ENCODE measurements at regions of chr17 and their contacts with region 1.

Region 1: DNA sequence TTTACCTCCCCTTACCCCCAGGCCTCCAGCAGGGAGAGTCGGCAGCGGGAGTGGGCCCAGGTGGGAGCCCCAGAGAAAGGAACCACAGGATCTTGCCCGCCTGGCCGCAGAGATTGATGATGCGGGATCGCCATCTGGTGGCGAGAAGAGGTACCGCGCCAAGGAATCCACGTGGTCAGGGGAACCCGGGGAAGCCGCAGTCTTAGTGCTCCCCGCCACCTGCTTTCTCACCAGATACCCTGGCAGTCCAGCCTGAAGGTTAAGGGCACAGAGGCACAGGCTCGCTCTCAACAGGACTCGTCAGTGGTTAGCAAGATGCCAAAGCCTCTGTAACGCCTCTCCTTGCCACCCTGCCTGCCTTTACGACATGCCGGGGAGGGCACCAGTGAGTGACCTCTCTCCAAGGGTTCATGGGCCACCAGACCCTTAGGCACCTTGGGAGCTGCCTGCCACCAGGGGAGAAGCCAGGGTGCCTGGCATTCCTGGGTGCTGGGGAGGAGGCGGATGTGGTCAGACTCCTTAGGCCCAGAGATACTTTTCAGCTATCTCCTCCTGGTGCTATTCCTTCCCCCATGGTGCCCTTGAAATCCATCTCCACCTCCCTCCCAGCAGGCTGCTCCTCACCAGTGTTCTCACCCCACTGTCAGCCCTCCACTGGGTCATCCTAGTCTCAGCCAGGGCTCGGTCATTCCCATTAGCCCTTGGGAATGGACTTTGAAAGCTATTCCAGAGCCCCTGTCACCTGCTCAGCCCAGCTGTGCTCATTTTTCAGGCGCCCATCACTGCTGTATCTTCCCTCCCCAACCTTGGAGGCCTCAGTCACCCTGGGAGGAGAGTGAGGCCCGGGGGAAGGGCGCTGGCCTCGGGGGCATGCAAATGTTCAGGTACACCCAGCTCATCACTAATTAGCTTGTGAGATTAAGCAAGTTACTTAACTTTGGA is 5.5 kb upstream of the RHBDF2 start:
- DNase-seq: no peak
- ATAC-seq: peak; percentile 90
- H3K4me3 ChIP-seq: peak overlapping the region in 1 of 2 experiments; percentile 33; a peak in 2 of 4 replicates
- H3K27ac ChIP-seq: no peak overlapping the region; the same call in 1 of the 2 replicates
- H3K4me1 ChIP-seq: peaks cover 7% of the 10 kb centered on the region
- H3K27me3 ChIP-seq: no peaks in the 10 kb centered on the region
- CTCF ChIP-seq: peak; percentile 95

Region 2: GRCh38 chr17:76353599-76354316 is 152.9 kb before region 1 on chr17 and contains the start of gene PRPSAP1:
- CTCF ChIA-PET with region 1: interaction called, 11 read pairs
- POLR2A ChIA-PET with region 1: no interaction called
- in situ Hi-C with region 1: no loop called
- intact Hi-C with region 1: no loop called
- DNase-seq: peak; percentile 74
- ATAC-seq: peak; percentile 97
- H3K4me3 ChIP-seq: peak within 1 kb of the TSS; percentile 78 to 89
- H3K27ac ChIP-seq: peak within 1 kb of the TSS; percentile 94
- H3K4me1 ChIP-seq: peaks cover 16% of the 10 kb centered on the region
- H3K27me3 ChIP-seq: no peaks in the 10 kb centered on the region
- CTCF ChIP-seq: no peak
- total RNA-seq, gene PRPSAP1: 99.6 TPM

Region 3: DNA sequence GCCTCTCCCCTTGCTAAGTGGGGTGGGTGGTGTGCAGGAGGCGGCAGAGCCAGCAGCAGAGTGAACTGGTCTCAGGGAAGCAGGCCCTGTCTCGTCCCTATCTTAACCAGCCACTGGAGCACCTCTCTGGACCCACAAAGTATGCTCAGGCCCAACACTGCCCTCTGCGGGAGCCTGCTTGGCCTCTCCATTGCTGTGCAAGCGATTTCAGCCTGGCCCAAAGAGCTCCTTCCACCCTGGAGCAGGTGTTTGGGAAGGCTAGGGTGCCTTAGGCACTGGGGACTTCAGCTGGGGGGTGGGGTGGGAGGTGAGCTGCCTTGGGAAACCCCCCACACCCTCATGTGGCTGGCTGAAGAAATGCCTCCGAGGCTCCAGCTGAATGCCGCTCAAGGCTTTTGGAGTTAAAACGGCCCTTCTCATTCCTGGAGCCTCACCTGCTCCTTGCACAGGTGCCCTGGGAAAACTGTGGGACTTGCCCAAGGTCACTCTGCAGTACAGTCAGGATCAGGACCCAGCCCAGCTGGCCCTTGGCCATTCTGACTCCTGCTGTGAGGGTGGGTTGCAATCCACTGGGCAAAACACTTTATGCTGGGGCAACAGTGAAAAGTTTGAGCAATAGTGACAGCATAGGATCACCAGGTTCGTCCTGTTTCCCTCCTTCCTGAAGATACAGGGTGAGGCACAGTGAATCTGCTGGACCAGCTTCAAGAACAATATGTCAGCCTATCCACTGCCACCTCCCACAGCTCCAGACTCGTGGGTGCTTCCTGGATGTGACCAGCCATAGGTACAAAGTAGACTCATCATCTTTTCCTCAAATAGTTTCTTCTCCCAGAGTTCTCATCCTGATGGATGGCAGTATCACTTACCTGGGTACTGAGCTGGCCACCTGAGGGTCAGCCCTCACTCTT is 47.8 kb before region 1 on chr17:
- CTCF ChIA-PET with region 1: interaction called, 12 read pairs
- POLR2A ChIA-PET with region 1: no interaction called
- in situ Hi-C with region 1: no loop called
- intact Hi-C with region 1: loop called (anchors 1 kb)
- DNase-seq: no peak
- ATAC-seq: peak; percentile 95
- H3K4me3 ChIP-seq: no peak overlapping the region
- H3K27ac ChIP-seq: no peak overlapping the region
- H3K4me1 ChIP-seq: no peaks in the 10 kb centered on the region
- H3K27me3 ChIP-seq: no peaks in the 10 kb centered on the region
- CTCF ChIP-seq: peak; percentile 90

Region 4: GRCh38 chr17:76467366-76467765 is 39.3 kb before region 1 on chr17 and contains the start of gene AANAT:
- CTCF ChIA-PET with region 1: interaction called, 10 read pairs
- POLR2A ChIA-PET with region 1: interaction called, 3 read pairs
- in situ Hi-C with region 1: no loop called
- intact Hi-C with region 1: loop called (anchors 1 kb)
- DNase-seq: no peak
- ATAC-seq: no peak
- H3K4me3 ChIP-seq: no peak within 1 kb of the TSS
- H3K27ac ChIP-seq: no peak within 1 kb of the TSS
- H3K4me1 ChIP-seq: peaks cover 5% of the 10 kb centered on the region; the same call in 1 of the 2 replicates
- H3K27me3 ChIP-seq: no peaks in the 10 kb centered on the region
- CTCF ChIP-seq: no peak
- total RNA-seq, gene AANAT: not detected

Measured in Panc1 (cell line).